CD14-positive monocyte (primary cell): ENCODE measurements at regions of chr10 and their contacts with region 1.

Region 1: GRCh38 chr10:96292971-96293920 is 11.0 kb upstream of the DNTT start:
- DNase-seq: peak; percentile 15 to 59 (median 46)
- H3K4me3 ChIP-seq: no peak overlapping the region
- H3K4me3 Mint-ChIP-seq: no peak overlapping the region
- H3K27ac ChIP-seq: no peak overlapping the region
- H3K27ac Mint-ChIP-seq: no peak overlapping the region
- H3K4me1 ChIP-seq: peaks cover 5 to 7% of the 10 kb centered on the region in 2 donors
- H3K4me1 Mint-ChIP-seq: peaks cover 23% of the 10 kb centered on the region
- H3K27me3 ChIP-seq: no peaks in the 10 kb centered on the region
- H3K27me3 Mint-ChIP-seq: peaks cover 0 to 2% (median 0%) of the 10 kb centered on the region in 3 donors
- CTCF ChIP-seq: peak; percentile 69

Region 2: GRCh38 chr10:96017191-96017687 is 276.0 kb before region 1 on chr10:
- intact Hi-C with region 1: loop called (anchors 5 to 10 kb)
- DNase-seq: peak; percentile 29 to 68 (median 52)
- H3K4me3 ChIP-seq: no peak overlapping the region
- H3K4me3 Mint-ChIP-seq: no peak overlapping the region
- H3K27ac ChIP-seq: no peak overlapping the region
- H3K27ac Mint-ChIP-seq: no peak overlapping the region
- H3K4me1 ChIP-seq: no peaks in the 10 kb centered on the region
- H3K4me1 Mint-ChIP-seq: peaks cover 2% of the 10 kb centered on the region
- H3K27me3 ChIP-seq: no peaks in the 10 kb centered on the region
- H3K27me3 Mint-ChIP-seq: peaks cover 0 to 3% (median 2%) of the 10 kb centered on the region in 3 donors
- CTCF ChIP-seq: peak; percentile 76

Region 3: GRCh38 chr10:96218826-96219225 is 74.4 kb before region 1 on chr10:
- intact Hi-C with region 1: no loop called
- DNase-seq: no peak
- H3K4me3 ChIP-seq: no peak overlapping the region
- H3K4me3 Mint-ChIP-seq: no peak overlapping the region
- H3K27ac ChIP-seq: no peak overlapping the region
- H3K27ac Mint-ChIP-seq: no peak overlapping the region
- H3K4me1 ChIP-seq: no peaks in the 10 kb centered on the region
- H3K4me1 Mint-ChIP-seq: no peaks in the 10 kb centered on the region
- H3K27me3 ChIP-seq: no peaks in the 10 kb centered on the region
- H3K27me3 Mint-ChIP-seq: no peaks in the 10 kb centered on the region
- CTCF ChIP-seq: no peak

Region 4: DNA sequence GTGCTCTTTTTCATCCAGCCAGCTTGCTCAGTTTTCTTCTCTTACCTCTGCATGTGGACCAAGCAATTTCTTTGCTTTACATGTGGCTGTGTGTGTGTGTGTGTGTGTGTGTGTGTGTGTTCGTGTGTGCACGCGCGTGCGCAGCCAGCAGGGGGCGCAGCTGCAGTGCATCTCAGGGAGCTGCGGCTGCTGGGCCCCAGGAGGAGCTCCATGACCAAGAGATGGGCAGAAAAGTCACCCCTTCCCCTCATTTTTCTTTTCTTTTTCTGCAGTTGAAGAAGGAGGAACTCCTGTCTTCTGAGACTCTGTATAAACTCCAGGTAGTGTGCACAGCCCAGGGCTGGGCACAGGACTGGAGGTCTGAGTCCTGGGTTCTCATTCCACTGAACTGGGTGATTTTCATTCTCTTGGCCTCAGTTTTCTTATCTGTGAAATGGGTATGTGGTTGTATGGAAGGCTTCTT is 63.6 kb before region 1 on chr10:
- intact Hi-C with region 1: loop called (anchors 2 kb)
- DNase-seq: peak; percentile 55 to 77 (median 75)
- H3K4me3 ChIP-seq: no peak overlapping the region
- H3K4me3 Mint-ChIP-seq: no peak overlapping the region
- H3K27ac ChIP-seq: no peak overlapping the region
- H3K27ac Mint-ChIP-seq: peak overlapping the region in 1 of 7 donors; percentile 30
- H3K4me1 ChIP-seq: no peaks in the 10 kb centered on the region
- H3K4me1 Mint-ChIP-seq: no peaks in the 10 kb centered on the region
- H3K27me3 ChIP-seq: no peaks in the 10 kb centered on the region
- H3K27me3 Mint-ChIP-seq: no peaks in the 10 kb centered on the region
- CTCF ChIP-seq: peak; percentile 71